Sigmoid colon (tissue), 7 donors: ENCODE measurements at regions of chr9 and their contacts with region 1.

Region 1: DNA sequence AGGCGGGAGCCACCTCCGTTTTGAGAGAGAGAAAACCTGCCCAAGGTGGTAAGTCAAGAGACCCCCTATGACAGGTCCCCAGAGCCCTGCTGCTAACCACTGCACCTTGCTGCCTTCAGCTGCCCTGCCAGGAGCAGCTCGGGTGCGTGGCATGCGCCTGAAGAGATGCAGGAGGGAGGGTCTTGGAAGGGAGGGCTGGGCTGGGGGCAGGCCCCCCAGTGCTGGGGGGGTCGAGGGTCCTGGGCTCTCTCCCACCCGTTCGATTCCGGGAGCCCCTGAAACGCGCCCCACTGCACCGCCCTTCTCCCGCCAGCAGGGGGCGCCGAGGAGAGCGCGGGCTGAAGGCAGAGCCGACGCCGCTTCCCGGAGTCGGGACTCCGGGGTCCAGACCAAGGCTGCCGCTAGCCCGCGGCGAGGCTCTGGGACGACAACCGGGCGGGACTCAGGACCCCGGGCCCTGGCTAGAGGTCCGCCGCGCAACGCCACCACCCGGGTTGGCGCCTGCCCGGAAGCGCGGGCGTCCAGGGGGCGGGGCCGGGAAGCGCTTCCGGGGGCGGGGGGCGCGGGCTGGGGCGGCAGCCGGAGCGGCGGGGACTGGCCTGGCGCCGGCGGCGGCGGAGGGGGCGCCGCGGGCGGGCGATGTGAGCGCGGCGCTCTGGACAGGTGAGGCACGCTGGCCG is at the start of gene ZBTB34:
- DNase-seq: peak; percentile 74
- H3K4me3 ChIP-seq: peak within 1 kb of the TSS; percentile 90 to 99 (median 96)
- H3K27ac ChIP-seq: peak within 1 kb of the TSS; percentile 91 to 96 (median 93)
- H3K4me1 ChIP-seq: peaks cover 0 to 43% (median 31%) of the 10 kb centered on the region in 4 donors
- H3K27me3 ChIP-seq: no peaks in the 10 kb centered on the region
- CTCF ChIP-seq: peak; percentile 98 to 100 (median 98)
- EP300 ChIP-seq: no peak
- POLR2A ChIP-seq: no peak
- total RNA-seq, gene ZBTB34: 8.9 to 11.4 (median 9.7) TPM

Region 2: DNA sequence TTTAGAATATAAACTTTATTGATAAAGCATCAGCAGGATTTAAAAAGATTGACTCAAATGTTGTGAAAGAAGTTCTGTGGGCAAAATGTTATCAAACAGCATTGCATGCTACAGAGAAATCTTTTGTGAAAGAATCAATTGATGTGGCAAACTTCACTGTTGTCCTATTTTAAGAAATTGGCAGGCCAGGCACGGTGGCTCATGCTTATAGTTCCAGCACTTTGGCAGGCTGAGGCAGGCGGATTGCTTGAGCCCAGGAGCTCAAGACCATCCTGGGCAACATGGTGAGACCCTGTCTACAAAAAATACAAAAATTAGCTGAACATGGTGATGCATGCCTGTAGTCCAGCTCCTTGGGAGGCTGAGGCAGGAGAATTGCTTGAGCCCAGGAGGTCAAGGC is 37.9 kb before region 1 on chr9:
- intact Hi-C with region 1: no loop called
- DNase-seq: no peak
- H3K4me3 ChIP-seq: no peak overlapping the region
- H3K27ac ChIP-seq: no peak overlapping the region
- H3K4me1 ChIP-seq: peaks cover 0 to 14% (median 5%) of the 10 kb centered on the region in 4 donors
- H3K27me3 ChIP-seq: no peaks in the 10 kb centered on the region
- CTCF ChIP-seq: no peak
- EP300 ChIP-seq: no peak
- POLR2A ChIP-seq: no peak

Region 3: GRCh38 chr9:126914458-126915280 is 54.5 kb after region 1 on chr9 and contains the start of gene RALGPS1:
- intact Hi-C with region 1: loop called (anchors 2 kb)
- DNase-seq: peak; percentile 98
- H3K4me3 ChIP-seq: peak within 1 kb of the TSS; percentile 23 to 73 (median 64)
- H3K27ac ChIP-seq: peak within 1 kb of the TSS; percentile 74 to 90 (median 82)
- H3K4me1 ChIP-seq: peaks cover 0 to 11% (median 10%) of the 10 kb centered on the region in 4 donors
- H3K27me3 ChIP-seq: no peaks in the 10 kb centered on the region
- CTCF ChIP-seq: no peak
- EP300 ChIP-seq: no peak
- POLR2A ChIP-seq: no peak
- total RNA-seq, gene RALGPS1: 11.4 to 18.6 (median 14.3) TPM

Region 4: DNA sequence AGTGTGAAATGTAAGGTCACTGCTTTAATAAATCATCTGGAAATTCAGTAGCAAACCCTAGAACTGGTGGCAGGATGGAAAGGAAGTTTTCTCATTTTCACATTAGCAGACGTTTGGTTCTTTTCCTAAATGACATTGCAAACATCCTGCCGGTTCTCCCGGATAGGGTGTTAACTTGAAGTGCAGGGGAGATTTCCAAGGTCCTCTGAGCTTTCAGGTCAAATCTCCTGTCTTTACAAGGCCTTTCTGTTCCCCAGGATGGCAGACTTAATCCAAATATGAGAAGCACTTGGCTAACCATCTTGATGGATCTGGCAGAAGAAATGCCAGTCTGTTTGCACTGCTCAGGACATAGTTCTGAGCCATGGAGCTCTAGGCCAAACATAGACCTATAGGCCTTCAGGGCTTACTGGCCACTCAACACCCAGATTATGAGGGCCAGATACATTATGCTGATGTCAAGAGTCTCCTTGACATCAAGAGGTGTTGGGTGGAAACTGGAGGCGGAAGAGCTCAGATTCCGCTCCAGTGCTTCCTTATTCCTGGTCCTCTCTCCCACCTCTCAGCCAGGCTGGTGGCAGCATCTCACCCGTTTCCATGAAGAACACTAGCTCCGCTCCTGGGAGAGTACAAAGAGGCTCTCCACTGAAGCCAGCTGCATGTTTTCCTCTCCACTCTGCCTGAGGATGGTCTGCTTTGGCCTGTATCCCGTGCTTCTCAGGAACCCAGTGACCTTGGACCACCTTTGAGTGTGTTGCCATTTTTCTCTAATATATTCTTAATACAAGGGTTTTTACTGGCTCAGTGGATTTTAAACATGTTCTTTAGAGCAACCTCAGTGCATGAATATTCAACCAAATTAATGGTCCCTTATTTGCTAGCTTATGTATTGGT is 115.4 kb after region 1 on chr9:
- intact Hi-C with region 1: no loop called
- DNase-seq: no peak
- H3K4me3 ChIP-seq: no peak overlapping the region
- H3K27ac ChIP-seq: peak overlapping the region; percentile 16 to 44 (median 24)
- H3K4me1 ChIP-seq: peaks cover 0 to 17% (median 7%) of the 10 kb centered on the region in 4 donors
- H3K27me3 ChIP-seq: no peaks in the 10 kb centered on the region
- CTCF ChIP-seq: no peak
- EP300 ChIP-seq: no peak
- POLR2A ChIP-seq: no peak